ENCODE measurements at regions of chr15 and their contacts with region 1.

Region 1: DNA sequence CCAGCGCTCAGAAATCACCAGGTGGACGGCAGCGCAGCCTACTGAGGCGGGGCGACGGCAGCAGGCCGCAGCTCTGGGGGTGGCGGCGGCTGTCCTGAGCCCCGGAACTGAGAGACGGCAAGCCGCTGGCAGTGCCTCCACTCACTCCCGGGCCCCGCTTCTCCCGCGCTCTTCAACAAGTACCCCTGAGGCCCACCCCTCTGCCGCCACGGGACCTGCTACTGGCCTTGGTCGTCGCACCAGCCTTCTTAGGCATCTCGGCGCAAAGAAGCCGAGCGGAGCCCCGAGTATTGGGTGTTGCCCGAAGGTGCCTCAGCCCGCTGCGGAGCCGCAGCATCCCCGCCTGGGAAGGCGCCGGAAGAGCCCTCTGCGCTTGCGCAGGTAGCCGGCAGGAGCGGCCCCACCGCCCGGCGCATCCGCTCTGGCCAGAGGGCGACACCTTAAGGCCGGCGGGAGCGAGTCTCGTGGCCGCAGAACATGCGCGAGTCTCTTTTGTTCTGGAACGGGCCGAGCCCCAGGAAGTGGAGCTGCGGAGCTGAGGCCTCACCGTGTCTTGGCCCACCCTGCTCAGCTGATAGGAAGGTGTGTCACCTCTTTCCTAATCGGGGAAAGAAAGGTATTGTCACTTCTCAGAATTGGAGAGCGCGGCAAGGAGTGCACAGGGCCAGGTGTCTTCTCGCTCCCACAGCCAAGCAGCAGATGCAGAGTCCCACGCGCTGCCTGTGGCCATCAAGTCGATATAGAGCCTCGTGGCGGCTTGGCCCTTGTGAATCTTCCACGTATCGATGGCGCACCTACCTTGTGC is at the start of gene C15orf40:
- DNase-seq: peak; percentile 94 to 96
- ATAC-seq: peak; percentile 99
- H3K4me3 ChIP-seq: peak within 1 kb of the TSS; percentile 69 to 97
- H3K27ac ChIP-seq: peak within 1 kb of the TSS in 1 of 2 donors; percentile 34
- H3K4me1 ChIP-seq: peaks cover 0 to 4% of the 10 kb centered on the region in 2 donors
- H3K27me3 ChIP-seq: no peaks in the 10 kb centered on the region
- total RNA-seq, gene C15orf40: 15.0 to 15.3 TPM

Region 2: DNA sequence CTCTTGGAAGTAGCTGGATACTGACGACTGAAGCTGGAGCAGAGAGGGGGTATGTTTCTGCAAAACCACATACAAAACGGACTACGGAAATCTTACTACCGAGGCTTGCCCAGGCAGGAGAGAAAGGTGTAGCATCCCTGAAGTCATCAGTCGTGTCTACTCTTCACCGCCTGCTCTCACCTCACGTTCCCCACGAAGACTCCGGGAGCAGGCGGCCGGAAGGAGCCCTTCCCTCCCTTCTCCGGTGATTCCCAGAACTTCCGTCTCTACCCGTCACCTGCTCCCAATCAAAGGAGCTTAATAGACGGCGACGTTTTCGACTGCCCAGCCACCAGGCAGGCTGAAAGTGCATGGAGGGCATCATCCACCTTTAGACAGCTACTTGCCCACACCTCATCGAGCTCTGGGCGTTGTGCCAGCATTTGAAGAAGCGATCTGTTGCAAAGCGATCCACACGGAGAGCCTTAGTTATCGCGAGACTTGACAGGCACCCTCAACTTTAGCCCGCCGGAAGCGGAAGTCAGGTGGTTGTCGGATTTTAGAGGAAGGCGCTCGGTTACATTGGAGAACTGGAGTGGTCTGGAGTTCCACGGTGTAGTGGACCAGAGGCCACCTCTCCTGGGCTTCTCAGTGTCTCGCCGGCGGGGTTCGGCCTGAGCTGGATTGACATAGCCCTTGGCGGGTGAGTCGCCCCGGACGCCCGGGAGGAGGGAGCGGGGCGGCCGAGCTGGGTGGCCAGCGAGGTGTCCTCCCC is 25.6 kb before region 1 on chr15 and contains the start of gene RAMAC:
- intact Hi-C with region 1: loop called in 1 of 2 experiments (anchors 2 kb)
- DNase-seq: peak; percentile 95 to 96
- ATAC-seq: peak; percentile 97
- H3K4me3 ChIP-seq: peak within 1 kb of the TSS; percentile 86 to 90
- H3K27ac ChIP-seq: peak within 1 kb of the TSS in 1 of 2 donors; percentile 68
- H3K4me1 ChIP-seq: no peaks in the 10 kb centered on the region
- H3K27me3 ChIP-seq: no peaks in the 10 kb centered on the region
- total RNA-seq, gene RAMAC: 11.5 to 12.2 TPM

Measured in aorta (tissue), 5 donors.